Dendritic cell treated with granulocyte-macrophage colony-stimulating factor and Interleukin-4, amounts not matched to agents 40 ng/mL and 50 ng/mL, for 4 days (primary cell): ENCODE measurements at regions of chr10 and their contacts with region 1.

Region 1: GRCh38 chr10:102796407-102797176 is 40.6 kb downstream of the CYP17A1 start:
- H3K4me3 Mint-ChIP-seq: peak overlapping the region; percentile 48
- H3K27ac Mint-ChIP-seq: peak overlapping the region; percentile 89
- H3K4me1 Mint-ChIP-seq: peaks cover 65% of the 10 kb centered on the region
- H3K27me3 Mint-ChIP-seq: no peaks in the 10 kb centered on the region

Region 2: DNA sequence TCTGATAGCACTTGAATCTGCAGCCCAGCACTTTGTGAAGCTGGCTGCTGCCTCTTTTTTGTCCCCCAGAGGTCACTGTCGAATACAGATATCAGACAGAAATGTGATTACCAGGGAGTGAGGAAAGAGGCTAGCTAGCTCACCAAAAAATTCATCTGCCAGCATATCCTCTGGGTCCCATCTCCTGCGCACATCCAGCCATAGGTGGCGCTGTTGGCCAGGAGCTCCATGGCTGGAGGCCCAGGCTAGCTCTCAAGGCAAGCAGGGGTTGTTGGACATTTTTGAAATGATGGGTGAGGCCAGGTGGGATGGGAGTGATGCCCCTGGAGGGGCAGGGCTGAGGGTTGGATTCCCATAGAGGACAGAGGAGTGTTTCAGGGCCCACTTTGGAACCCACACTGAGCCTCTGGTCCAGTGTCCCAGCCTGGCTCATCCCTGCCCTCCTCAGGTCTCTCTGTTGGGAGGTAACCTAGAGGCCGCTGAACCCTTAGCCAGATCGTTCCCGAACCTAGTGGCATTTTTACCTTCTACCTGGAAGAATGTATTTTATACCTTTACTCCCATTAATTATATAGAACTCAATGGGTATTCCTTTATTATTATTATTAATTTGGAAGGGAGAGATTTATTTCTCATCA is 1193.7 kb before region 1 on chr10:
- intact Hi-C with region 1: no loop called
- H3K4me3 Mint-ChIP-seq: no peak overlapping the region
- H3K27ac Mint-ChIP-seq: no peak overlapping the region
- H3K4me1 Mint-ChIP-seq: no peaks in the 10 kb centered on the region
- H3K27me3 Mint-ChIP-seq: no peaks in the 10 kb centered on the region

Region 3: DNA sequence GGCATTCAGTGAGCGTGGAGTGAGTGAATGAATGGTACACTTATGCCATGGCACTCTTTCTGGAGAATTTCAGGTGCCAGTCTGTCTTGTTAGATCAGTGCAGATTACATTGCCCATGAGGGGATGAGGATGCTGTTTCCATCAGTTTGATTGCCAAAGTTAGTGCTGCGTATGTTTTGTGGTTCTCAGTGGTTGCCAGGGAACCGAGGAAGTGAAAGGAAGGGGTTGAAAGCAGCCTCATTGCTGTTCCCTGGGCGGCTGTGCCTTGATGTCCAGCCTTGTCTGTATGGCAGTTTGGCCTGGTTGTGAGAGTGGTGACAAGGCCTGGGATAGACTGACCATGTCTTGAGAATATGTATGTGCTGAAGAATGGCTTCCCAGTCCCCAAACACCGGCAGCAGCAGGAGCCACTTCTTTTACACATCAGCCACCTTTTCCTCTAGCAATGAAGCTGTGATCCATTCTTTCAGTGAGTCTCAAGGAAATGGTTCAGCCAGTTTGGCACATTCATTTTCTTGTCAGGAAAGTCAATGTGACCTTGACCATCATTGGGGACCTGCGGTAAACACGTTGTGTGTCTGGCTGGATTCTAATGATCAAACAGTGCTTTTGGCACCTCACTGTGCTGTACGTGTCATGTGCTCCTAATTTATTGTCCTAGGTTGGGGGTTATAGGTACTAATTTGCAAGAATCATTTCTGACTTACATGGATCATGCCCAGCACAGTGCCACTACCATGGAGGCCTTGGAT is 22.4 kb before region 1 on chr10:
- intact Hi-C with region 1: loop called (anchors 2 kb)
- H3K4me3 Mint-ChIP-seq: no peak overlapping the region
- H3K27ac Mint-ChIP-seq: peak overlapping the region; percentile 87
- H3K4me1 Mint-ChIP-seq: peaks cover 64% of the 10 kb centered on the region
- H3K27me3 Mint-ChIP-seq: no peaks in the 10 kb centered on the region